ENCODE measurements at regions of chr1 and their contacts with region 1.

Region 1: GRCh38 chr1:93909146-93910050 is at the start of gene GCLM:
- DNase-seq: peak; percentile 68 to 95
- ATAC-seq: peak; percentile 94 to 96
- H3K4me3 ChIP-seq: peak within 1 kb of the TSS; percentile 92
- H3K27ac ChIP-seq: peak within 1 kb of the TSS; percentile 96 to 100
- H3K4me1 ChIP-seq: peaks cover 14% of the 10 kb centered on the region
- CTCF ChIP-seq: peak; percentile 87
- EP300 ChIP-seq: peak in 1 of 2 experiments; percentile 53; a peak in 1 of 5 replicates
- POLR2A ChIP-seq: peak; percentile 39
- RAD21 ChIP-seq: peak in 1 of 2 experiments; percentile 65; a peak in 3 of 5 replicates
- polyA plus RNA-seq, gene GCLM: 160 and 163 TPM in 2 replicates

Region 2: DNA sequence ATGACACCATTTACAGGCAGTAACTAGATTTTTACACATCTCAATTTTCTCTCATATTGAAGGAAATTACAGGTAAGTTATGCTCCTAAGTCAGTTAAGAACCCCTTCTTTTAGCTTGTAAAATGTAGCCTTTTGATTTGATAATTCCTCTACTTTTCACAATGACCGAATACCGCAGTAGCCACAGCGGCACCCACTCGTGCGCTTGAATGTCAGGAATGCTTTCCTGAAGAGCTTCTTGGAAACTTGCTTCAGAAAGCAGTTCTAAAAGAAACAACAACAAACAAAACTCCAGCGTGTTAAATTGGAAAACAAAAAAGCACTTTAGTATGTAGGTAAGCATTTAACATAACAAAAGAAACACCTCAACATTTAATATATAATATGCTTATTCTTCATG is 20.5 kb before region 1 on chr1:
- CTCF ChIA-PET with region 1: interaction called, 11 read pairs
- POLR2A ChIA-PET with region 1: no interaction called
- DNase-seq: no peak
- ATAC-seq: no peak
- H3K4me3 ChIP-seq: no peak overlapping the region
- H3K27ac ChIP-seq: no peak overlapping the region
- H3K4me1 ChIP-seq: peaks cover 44% of the 10 kb centered on the region; the same call in 2 of the 3 replicates
- CTCF ChIP-seq: no peak
- EP300 ChIP-seq: no peak
- POLR2A ChIP-seq: no peak
- RAD21 ChIP-seq: no peak

Region 3: DNA sequence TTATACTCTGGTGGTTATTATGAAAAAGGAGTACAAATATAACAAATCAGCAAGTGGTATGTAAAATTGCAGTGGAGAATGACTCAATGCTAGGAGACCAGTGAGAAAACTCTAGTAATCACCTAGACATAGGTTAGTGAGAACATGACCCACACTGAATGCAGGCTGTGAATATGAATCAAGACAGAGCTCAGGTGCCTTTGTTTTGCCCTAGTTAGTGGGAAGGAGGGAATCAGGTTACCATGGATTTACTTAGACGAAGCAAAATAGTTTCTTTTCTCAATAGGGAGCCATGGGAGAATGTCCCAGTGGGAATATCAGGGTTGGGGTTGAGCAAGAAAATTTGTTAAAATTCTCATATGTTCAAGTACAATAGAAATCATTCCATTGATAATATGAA is 10.4 kb after region 1 on chr1:
- CTCF ChIA-PET with region 1: interaction called, 15 read pairs
- POLR2A ChIA-PET with region 1: no interaction called
- DNase-seq: no peak
- ATAC-seq: no peak
- H3K4me3 ChIP-seq: no peak overlapping the region
- H3K27ac ChIP-seq: no peak overlapping the region
- H3K4me1 ChIP-seq: no peaks in the 10 kb centered on the region
- CTCF ChIP-seq: no peak
- EP300 ChIP-seq: no peak
- POLR2A ChIP-seq: no peak
- RAD21 ChIP-seq: no peak

Region 4: GRCh38 chr1:93964777-93965200 is 55.4 kb after region 1 on chr1:
- CTCF ChIA-PET with region 1: interaction called, 6 read pairs
- POLR2A ChIA-PET with region 1: interaction called, 11 read pairs
- DNase-seq: peak; percentile 25 to 91
- ATAC-seq: peak; percentile 77 to 91
- H3K4me3 ChIP-seq: no peak overlapping the region
- H3K27ac ChIP-seq: peak overlapping the region; percentile 89 to 95
- H3K4me1 ChIP-seq: peaks cover 52% of the 10 kb centered on the region
- CTCF ChIP-seq: no peak
- EP300 ChIP-seq: peak in 1 of 2 experiments; percentile 49; a peak in 1 of 5 replicates
- POLR2A ChIP-seq: no peak
- RAD21 ChIP-seq: no peak

Region 5: GRCh38 chr1:93980320-93981273 is 71.2 kb after region 1 on chr1:
- CTCF ChIA-PET with region 1: interaction called, 13 read pairs
- POLR2A ChIA-PET with region 1: no interaction called
- DNase-seq: peak in 1 of 2 experiments; percentile 18
- ATAC-seq: peak; percentile 60 to 92; a peak in 4 of 6 replicates
- H3K4me3 ChIP-seq: no peak overlapping the region
- H3K27ac ChIP-seq: peak overlapping the region in 1 of 2 experiments; percentile 41; a peak in 2 of 6 replicates
- H3K4me1 ChIP-seq: peaks cover 25% of the 10 kb centered on the region
- CTCF ChIP-seq: 0 out of 3 replicates have a peak, but pooled peaks have one; percentile 12
- EP300 ChIP-seq: no peak
- POLR2A ChIP-seq: no peak
- RAD21 ChIP-seq: peak in 1 of 2 experiments; percentile 27; a peak in 1 of 5 replicates

Region 6: GRCh38 chr1:94000510-94001282 is 91.3 kb after region 1 on chr1:
- CTCF ChIA-PET with region 1: no interaction called
- POLR2A ChIA-PET with region 1: no interaction called
- DNase-seq: no peak
- ATAC-seq: no peak
- H3K4me3 ChIP-seq: no peak overlapping the region
- H3K27ac ChIP-seq: no peak overlapping the region
- H3K4me1 ChIP-seq: 0 out of 3 replicates have a peak, but pooled peaks cover 8% of the 10 kb centered on the region
- CTCF ChIP-seq: no peak
- EP300 ChIP-seq: no peak
- POLR2A ChIP-seq: no peak
- RAD21 ChIP-seq: no peak

Region 7: GRCh38 chr1:94130851-94131595 is 221.6 kb after region 1 on chr1:
- CTCF ChIA-PET with region 1: no interaction called
- POLR2A ChIA-PET with region 1: no interaction called
- DNase-seq: no peak
- ATAC-seq: no peak
- H3K4me3 ChIP-seq: no peak overlapping the region
- H3K27ac ChIP-seq: no peak overlapping the region
- H3K4me1 ChIP-seq: peaks cover 3% of the 10 kb centered on the region
- CTCF ChIP-seq: no peak
- EP300 ChIP-seq: no peak
- POLR2A ChIP-seq: no peak
- RAD21 ChIP-seq: no peak

Region 8: GRCh38 chr1:94562519-94563260 is 653.3 kb after region 1 on chr1:
- CTCF ChIA-PET with region 1: no interaction called
- POLR2A ChIA-PET with region 1: no interaction called
- DNase-seq: peak in 1 of 2 experiments; percentile 43
- ATAC-seq: peak in 1 of 2 experiments; percentile 71; a peak in 3 of 6 replicates
- H3K4me3 ChIP-seq: no peak overlapping the region
- H3K27ac ChIP-seq: peak overlapping the region; percentile 17 to 52; a peak in 4 of 6 replicates
- H3K4me1 ChIP-seq: peaks cover 10% of the 10 kb centered on the region
- CTCF ChIP-seq: no peak
- EP300 ChIP-seq: no peak
- POLR2A ChIP-seq: no peak
- RAD21 ChIP-seq: no peak

Measured in A549 (cell line).